ENCODE measurements at regions of chr6 and their contacts with region 1.

Region 1: DNA sequence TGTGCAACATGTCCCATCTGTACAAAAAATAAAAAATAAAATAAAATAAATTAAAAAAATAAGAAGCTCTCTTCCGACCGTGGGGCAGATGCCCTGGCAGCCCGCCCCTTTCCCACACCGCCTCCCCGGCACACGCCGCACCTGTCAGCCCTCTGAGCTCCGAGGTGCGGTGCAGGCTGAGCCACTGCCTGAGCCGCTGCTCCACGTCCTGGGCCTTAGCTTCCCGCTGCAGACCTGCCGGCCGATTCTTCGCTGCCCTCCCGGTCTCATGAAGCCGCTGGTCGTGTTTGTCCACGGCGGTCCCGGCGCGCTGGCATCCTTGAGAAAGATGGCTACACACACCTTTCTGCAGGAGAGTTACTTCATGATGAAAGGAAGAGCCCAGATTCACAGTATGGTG is 10.7 kb upstream of the CLPSL2 start:
- DNase-seq: no peak
- H3K4me3 ChIP-seq: no peak overlapping the region
- H3K27ac ChIP-seq: no peak overlapping the region
- H3K4me1 ChIP-seq: peaks cover 0 to 7% (median 4%) of the 10 kb centered on the region in 4 experiments; a peak in 6 of 7 replicates
- H3K27me3 ChIP-seq: no peaks in the 10 kb centered on the region
- CTCF ChIP-seq: no peak
- EP300 ChIP-seq: no peak
- POLR2A ChIP-seq: no peak
- RAD21 ChIP-seq: no peak

Region 2: GRCh38 chr6:35706468-35706867 is 59.3 kb before region 1 on chr6:
- CTCF ChIA-PET with region 1: no interaction called
- POLR2A ChIA-PET with region 1: no interaction called
- DNase-seq: no peak
- H3K4me3 ChIP-seq: no peak overlapping the region
- H3K27ac ChIP-seq: no peak overlapping the region
- H3K4me1 ChIP-seq: no peaks in the 10 kb centered on the region
- H3K27me3 ChIP-seq: no peaks in the 10 kb centered on the region
- CTCF ChIP-seq: no peak
- EP300 ChIP-seq: no peak
- POLR2A ChIP-seq: no peak
- RAD21 ChIP-seq: no peak

Region 3: DNA sequence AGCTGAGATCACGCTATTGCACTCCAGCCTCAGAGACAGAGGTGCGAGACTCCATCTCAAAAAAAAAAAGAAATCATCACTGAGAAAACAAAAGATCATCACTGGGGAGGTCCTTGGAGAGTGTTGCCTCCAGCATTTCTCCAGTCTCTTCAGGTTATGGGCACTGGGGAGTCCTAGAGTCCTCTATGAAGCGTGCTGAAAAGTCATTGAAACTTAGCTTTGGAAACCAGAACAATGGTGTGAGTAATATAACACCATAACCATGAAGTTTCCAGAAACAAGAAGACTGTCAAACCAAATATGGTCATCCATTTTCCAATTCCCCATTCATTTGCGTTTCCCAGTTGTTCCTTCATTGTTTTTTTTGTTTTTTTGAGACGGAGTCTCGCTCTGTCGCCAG is 15.2 kb before region 1 on chr6:
- CTCF ChIA-PET with region 1: interaction called, 7 read pairs
- POLR2A ChIA-PET with region 1: interaction called, 39 read pairs
- DNase-seq: no peak
- H3K4me3 ChIP-seq: no peak overlapping the region
- H3K27ac ChIP-seq: no peak overlapping the region
- H3K4me1 ChIP-seq: peaks cover 3 to 14% (median 9%) of the 10 kb centered on the region in 4 experiments
- H3K27me3 ChIP-seq: no peaks in the 10 kb centered on the region
- CTCF ChIP-seq: no peak
- EP300 ChIP-seq: no peak
- POLR2A ChIP-seq: no peak
- RAD21 ChIP-seq: no peak

Region 4: GRCh38 chr6:35777361-35778066 is 11.8 kb after region 1 on chr6:
- CTCF ChIA-PET with region 1: no interaction called
- POLR2A ChIA-PET with region 1: interaction called, 21 read pairs
- DNase-seq: no peak
- H3K4me3 ChIP-seq: peak overlapping the region in 1 of 4 experiments; percentile 67; a peak in 1 of 8 replicates
- H3K27ac ChIP-seq: no peak overlapping the region
- H3K4me1 ChIP-seq: peaks cover 0 to 6% (median under 1%) of the 10 kb centered on the region in 4 experiments; a peak in 1 of 7 replicates
- H3K27me3 ChIP-seq: peaks cover 0 to 8% (median 3%) of the 10 kb centered on the region in 4 experiments; a peak in 4 of 7 replicates
- CTCF ChIP-seq: no peak
- EP300 ChIP-seq: no peak
- POLR2A ChIP-seq: no peak
- RAD21 ChIP-seq: no peak

Region 5: GRCh38 chr6:35786810-35787209 is 21.1 kb after region 1 on chr6:
- CTCF ChIA-PET with region 1: no interaction called
- POLR2A ChIA-PET with region 1: interaction called, 29 read pairs
- DNase-seq: no peak
- H3K4me3 ChIP-seq: no peak overlapping the region
- H3K27ac ChIP-seq: no peak overlapping the region
- H3K4me1 ChIP-seq: peaks cover 0 to 5% (median 0%) of the 10 kb centered on the region in 4 experiments; a peak in 3 of 7 replicates
- H3K27me3 ChIP-seq: no peaks in the 10 kb centered on the region
- CTCF ChIP-seq: no peak
- EP300 ChIP-seq: no peak
- POLR2A ChIP-seq: no peak
- RAD21 ChIP-seq: no peak

Region 6: GRCh38 chr6:35797837-35798526 is 32.2 kb after region 1 on chr6:
- CTCF ChIA-PET with region 1: interaction called, 3 read pairs
- POLR2A ChIA-PET with region 1: interaction called, 12 read pairs
- DNase-seq: no peak
- H3K4me3 ChIP-seq: no peak overlapping the region
- H3K27ac ChIP-seq: no peak overlapping the region
- H3K4me1 ChIP-seq: peaks cover 0 to 7% (median 5%) of the 10 kb centered on the region in 4 experiments; a peak in 4 of 7 replicates
- H3K27me3 ChIP-seq: no peaks in the 10 kb centered on the region
- CTCF ChIP-seq: no peak
- EP300 ChIP-seq: no peak
- POLR2A ChIP-seq: no peak
- RAD21 ChIP-seq: no peak

Region 7: GRCh38 chr6:35810971-35811497 is 45.3 kb after region 1 on chr6:
- CTCF ChIA-PET with region 1: no interaction called
- POLR2A ChIA-PET with region 1: interaction called, 12 read pairs
- DNase-seq: no peak
- H3K4me3 ChIP-seq: no peak overlapping the region
- H3K27ac ChIP-seq: no peak overlapping the region
- H3K4me1 ChIP-seq: peaks cover 0 to 3% (median 0%) of the 10 kb centered on the region in 4 experiments; a peak in 1 of 7 replicates
- H3K27me3 ChIP-seq: no peaks in the 10 kb centered on the region
- CTCF ChIP-seq: no peak
- EP300 ChIP-seq: no peak
- POLR2A ChIP-seq: no peak
- RAD21 ChIP-seq: no peak